ENCODE measurements at regions of chr10 and their contacts with region 1.

Region 1: DNA sequence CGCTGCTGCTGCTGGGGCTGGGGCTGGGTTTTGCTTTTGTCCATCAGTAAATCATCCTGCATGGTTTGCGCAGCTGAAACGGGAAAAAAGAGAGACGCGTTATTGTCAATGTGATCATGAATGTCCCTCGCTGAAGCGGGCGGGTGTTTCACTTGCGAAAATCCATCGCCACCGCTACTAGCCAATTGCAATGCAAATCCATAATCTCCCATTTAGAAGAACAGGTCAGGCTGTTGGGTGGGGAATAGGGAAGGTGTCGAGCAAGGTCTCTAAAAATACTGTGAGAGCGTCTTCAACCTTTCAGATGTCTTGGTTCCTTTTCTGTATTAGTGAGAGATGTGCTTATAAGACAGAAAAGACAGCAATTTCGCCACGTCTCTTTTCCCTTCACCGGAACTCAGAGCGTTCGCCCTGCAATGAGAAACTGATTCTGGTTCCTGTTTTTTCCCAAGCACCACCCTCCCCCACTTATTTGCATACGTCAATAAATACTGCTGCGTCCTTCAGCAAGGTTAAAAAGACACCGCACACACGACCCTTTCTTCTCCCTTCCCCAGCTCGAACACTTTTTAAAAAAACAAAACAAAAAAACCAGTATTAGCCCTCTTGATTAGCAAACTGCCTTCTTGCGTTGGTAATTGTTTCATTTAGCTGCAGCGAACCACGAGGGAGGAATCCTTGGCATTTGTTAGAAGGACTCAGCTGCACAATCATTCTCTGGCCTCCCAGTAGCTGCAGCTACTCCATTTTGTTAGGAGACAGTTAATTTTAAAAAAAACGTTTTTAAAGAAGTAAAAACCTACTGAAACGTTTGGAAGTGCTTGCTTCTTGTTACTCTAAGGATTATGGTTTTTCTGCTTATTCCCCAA is 50.4 kb downstream of the CPEB3 start:
- DNase-seq: peak; percentile 42 to 43
- H3K4me3 ChIP-seq: peak overlapping the region; percentile 69
- H3K4me3 Mint-ChIP-seq: peak overlapping the region; percentile 89
- H3K27ac Mint-ChIP-seq: peak overlapping the region; percentile 33
- H3K4me1 ChIP-seq: peaks cover 14% of the 10 kb centered on the region
- H3K4me1 Mint-ChIP-seq: peaks cover 24% of the 10 kb centered on the region
- H3K27me3 ChIP-seq: no peaks in the 10 kb centered on the region
- H3K27me3 Mint-ChIP-seq: peaks cover 6% of the 10 kb centered on the region
- CTCF ChIP-seq: no peak

Region 2: DNA sequence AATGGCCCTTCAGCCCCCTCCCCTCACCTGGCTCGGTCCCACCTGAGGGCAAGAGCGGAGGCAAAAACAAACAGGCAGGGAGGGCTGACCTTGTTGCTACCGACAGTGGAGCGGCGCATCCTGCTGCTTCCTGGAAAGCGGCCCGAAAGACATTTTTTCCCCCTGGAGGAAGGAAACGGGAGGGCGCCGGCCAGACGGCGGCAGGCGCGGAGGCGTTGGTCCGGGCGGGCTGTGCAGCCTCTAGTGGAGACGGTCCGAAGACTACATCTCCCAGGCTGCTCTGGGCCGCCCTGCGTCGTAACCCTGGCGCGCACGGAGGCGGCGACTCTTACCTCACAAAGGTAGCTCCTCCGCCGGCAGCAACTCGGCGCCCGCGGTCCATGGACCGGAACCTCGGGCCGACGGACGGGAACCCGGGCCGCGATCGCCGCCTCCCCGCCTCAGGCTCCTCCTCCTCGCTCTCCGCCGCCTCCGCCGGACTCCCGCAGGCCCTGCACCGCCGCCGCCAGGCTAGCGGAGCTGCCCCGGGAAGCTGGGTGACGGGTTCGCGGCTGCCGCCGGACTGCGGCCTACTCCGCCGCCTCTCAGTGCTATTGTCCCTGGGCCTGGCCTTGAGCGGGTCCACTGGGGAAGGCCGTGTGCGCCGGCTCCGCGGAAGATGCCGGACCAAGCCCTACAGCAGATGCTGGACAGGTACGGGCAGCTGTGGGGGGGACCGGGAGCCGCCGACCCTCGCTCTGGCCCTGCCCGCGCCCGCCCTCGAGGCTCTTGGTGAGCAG is 50.5 kb after region 1 on chr10 and contains the starts of genes CPEB3 and MARCHF5:
- CTCF ChIA-PET with region 1: interaction called, 9 read pairs
- POLR2A ChIA-PET with region 1: no interaction called
- intact Hi-C with region 1: loop called (anchors 1 kb)
- DNase-seq: peak; percentile 97 to 98
- H3K4me3 ChIP-seq: peak within 1 kb of the TSS; percentile 100
- H3K4me3 Mint-ChIP-seq: peak within 1 kb of the TSS; percentile 97
- H3K27ac Mint-ChIP-seq: peak within 1 kb of the TSS; percentile 92
- H3K4me1 ChIP-seq: peaks cover 7% of the 10 kb centered on the region; the same call in 1 of the 2 replicates
- H3K4me1 Mint-ChIP-seq: no peaks in the 10 kb centered on the region
- H3K27me3 ChIP-seq: no peaks in the 10 kb centered on the region
- H3K27me3 Mint-ChIP-seq: no peaks in the 10 kb centered on the region
- CTCF ChIP-seq: peak; percentile 56 to 81
- total RNA-seq, gene CPEB3: 2.3 TPM in 2 replicates
- total RNA-seq, gene MARCHF5: 30.4 and 33.9 TPM in 2 replicates